Mammary epithelial cell (primary cell): ENCODE measurements at regions of chr9 and their contacts with region 1.

Region 1: GRCh38 chr9:134267881-134268724 is 58.2 kb upstream of the RXRA start:
- DNase-seq: no peak
- H3K4me3 ChIP-seq: no peak overlapping the region
- H3K27ac ChIP-seq: no peak overlapping the region
- H3K4me1 ChIP-seq: no peaks in the 10 kb centered on the region
- H3K27me3 ChIP-seq: peaks cover 2% of the 10 kb centered on the region
- CTCF ChIP-seq: no peak

Region 2: DNA sequence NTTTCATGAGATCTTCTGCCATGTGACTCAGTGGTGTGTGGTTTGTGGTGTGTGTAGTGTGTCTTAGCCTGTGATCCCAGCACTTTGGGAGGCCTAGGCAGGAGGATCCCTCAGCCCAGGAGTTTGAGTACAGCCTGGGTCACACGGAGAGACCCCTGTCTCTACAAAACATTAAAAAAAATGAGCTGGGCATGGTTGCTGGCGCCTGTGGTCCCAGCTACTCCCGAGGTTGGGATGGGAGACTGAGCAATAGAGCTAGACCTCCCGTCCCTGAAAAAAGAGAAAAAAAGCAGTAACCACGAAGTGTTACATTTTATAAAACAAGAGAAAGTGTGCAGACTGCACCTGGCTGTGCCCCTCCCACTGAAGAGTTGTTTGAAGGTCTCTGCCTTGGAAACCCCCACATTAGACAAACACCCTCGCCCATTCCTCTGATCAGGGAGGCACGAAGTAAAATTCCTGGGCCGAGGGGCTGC is 82.5 kb before region 1 on chr9:
- CTCF ChIA-PET with region 1: no interaction called
- dilution Hi-C with region 1: loop called (anchors 5 kb)
- in situ Hi-C with region 1: no loop called
- intact Hi-C with region 1: no loop called
- DNase-seq: peak; percentile 22
- H3K4me3 ChIP-seq: no peak overlapping the region
- H3K27ac ChIP-seq: no peak overlapping the region
- H3K4me1 ChIP-seq: no peaks in the 10 kb centered on the region
- H3K27me3 ChIP-seq: peaks cover 7% of the 10 kb centered on the region
- CTCF ChIP-seq: no peak

Region 3: DNA sequence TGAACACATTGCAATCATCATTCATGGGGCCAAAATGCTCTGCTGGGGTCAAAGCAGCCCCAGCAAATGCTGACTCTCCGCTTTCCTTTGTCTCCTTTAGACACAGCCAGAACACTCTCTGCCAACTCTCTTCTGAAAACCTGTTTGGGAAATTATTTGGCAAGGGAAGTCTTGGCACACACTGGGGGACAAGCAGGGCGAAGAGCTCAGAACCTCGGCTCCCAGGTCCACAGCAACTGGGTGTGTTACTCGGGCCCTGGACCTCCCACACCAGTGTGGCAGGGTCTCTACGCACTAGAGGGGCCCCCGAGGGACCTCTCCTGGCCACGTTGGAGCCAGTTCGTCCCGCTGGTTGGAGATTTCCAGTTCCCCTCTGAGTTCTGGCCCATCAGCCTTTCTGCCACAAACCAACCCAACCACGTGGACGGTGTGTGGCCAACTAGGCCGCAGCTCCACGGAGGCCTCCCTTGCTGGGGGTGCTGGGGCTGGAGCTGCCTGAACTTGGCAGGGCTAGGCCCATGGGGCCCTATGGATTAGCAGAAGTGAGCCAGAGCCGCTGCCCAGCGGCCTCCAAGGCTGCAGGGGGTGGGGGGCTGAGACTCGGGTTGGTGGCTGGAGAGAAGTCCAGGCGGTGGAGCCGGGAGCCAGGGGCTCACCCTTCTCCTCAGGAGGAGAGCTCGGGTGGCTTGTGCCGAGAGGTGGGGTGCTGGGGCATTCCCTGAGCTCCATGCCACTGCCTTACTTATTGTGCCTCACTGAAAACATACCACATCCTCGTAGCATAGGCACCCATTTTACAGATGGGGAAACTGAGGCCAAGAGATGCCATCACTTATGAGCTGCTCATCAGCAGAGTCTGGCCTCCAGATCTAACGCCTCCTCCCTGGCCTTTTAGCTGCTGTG is 56.9 kb before region 1 on chr9:
- CTCF ChIA-PET with region 1: no interaction called
- dilution Hi-C with region 1: loop called (anchors 5 kb)
- in situ Hi-C with region 1: no loop called
- intact Hi-C with region 1: no loop called
- DNase-seq: no peak
- H3K4me3 ChIP-seq: no peak overlapping the region
- H3K27ac ChIP-seq: no peak overlapping the region
- H3K4me1 ChIP-seq: no peaks in the 10 kb centered on the region
- H3K27me3 ChIP-seq: no peaks in the 10 kb centered on the region
- CTCF ChIP-seq: no peak

Region 4: GRCh38 chr9:134316449-134317160 is 48.5 kb after region 1 on chr9:
- CTCF ChIA-PET with region 1: no interaction called
- dilution Hi-C with region 1: loop called (anchors 5 kb)
- in situ Hi-C with region 1: no loop called
- intact Hi-C with region 1: no loop called
- DNase-seq: peak; percentile 19
- H3K4me3 ChIP-seq: no peak overlapping the region
- H3K27ac ChIP-seq: no peak overlapping the region
- H3K4me1 ChIP-seq: peaks cover 4% of the 10 kb centered on the region
- H3K27me3 ChIP-seq: no peaks in the 10 kb centered on the region
- CTCF ChIP-seq: no peak

Region 5: GRCh38 chr9:134358662-134359319 is 90.7 kb after region 1 on chr9:
- CTCF ChIA-PET with region 1: no interaction called
- dilution Hi-C with region 1: loop called (anchors 5 kb)
- in situ Hi-C with region 1: no loop called
- intact Hi-C with region 1: no loop called
- DNase-seq: peak; percentile 66
- H3K4me3 ChIP-seq: no peak overlapping the region
- H3K27ac ChIP-seq: no peak overlapping the region
- H3K4me1 ChIP-seq: peaks cover 75% of the 10 kb centered on the region
- H3K27me3 ChIP-seq: no peaks in the 10 kb centered on the region
- CTCF ChIP-seq: no peak